Brain microvascular endothelial cell (primary cell): ENCODE measurements at regions of chr11 and their contacts with region 1.

Region 1: GRCh38 chr11:121964591-121964990 is 151.4 kb downstream of the BLID start:
- DNase-seq: peak; percentile 74
- H3K4me3 ChIP-seq: no peak overlapping the region
- H3K27ac ChIP-seq: peak overlapping the region; percentile 35
- H3K27me3 ChIP-seq: no peaks in the 10 kb centered on the region
- CTCF ChIP-seq: peak; percentile 19

Region 2: DNA sequence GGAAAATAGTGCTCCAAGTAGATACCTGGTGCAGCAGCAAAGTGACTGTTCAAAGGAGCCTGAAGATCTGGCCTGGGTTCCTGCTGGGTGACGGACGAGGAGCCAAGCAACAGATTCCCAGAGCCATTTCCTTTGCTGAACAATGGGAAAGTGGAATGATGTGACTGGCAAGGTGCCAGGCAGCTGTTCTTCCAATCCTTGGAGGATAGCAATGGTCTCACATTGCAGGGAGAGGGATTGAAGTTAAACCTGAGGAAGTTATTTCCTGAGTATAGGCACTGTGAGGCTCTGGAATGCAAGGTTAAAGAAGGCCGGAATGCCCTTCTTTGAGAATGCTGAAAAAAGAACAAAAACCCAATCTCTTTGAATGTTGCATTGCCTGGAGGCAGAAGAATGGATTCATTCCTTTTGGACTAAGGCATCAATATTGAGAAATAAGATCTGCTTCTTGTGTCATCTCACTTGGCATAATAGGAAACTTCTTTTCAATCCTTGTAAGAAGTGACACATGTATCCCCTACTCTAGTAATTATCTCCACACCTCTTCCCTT is 72.4 kb before region 1 on chr11:
- in situ Hi-C with region 1: loop called (anchors 5 kb)
- DNase-seq: peak; percentile 72
- H3K4me3 ChIP-seq: no peak overlapping the region
- H3K27ac ChIP-seq: peak overlapping the region; percentile 33
- H3K27me3 ChIP-seq: no peaks in the 10 kb centered on the region
- CTCF ChIP-seq: no peak